Ascending aorta (tissue), 2 donors: ENCODE measurements at regions of chr22 and their contacts with region 1.

Region 1: GRCh38 chr22:30005213-30005857 is 74.9 kb upstream of the HORMAD2 start:
- DNase-seq: peak in 1 of 2 donors; percentile 79
- H3K4me3 ChIP-seq: no peak overlapping the region
- H3K27ac ChIP-seq: no peak overlapping the region
- H3K4me1 ChIP-seq: no peaks in the 10 kb centered on the region
- H3K27me3 ChIP-seq: no peaks in the 10 kb centered on the region
- CTCF ChIP-seq: peak; percentile 79 to 95 (median 95)

Region 2: DNA sequence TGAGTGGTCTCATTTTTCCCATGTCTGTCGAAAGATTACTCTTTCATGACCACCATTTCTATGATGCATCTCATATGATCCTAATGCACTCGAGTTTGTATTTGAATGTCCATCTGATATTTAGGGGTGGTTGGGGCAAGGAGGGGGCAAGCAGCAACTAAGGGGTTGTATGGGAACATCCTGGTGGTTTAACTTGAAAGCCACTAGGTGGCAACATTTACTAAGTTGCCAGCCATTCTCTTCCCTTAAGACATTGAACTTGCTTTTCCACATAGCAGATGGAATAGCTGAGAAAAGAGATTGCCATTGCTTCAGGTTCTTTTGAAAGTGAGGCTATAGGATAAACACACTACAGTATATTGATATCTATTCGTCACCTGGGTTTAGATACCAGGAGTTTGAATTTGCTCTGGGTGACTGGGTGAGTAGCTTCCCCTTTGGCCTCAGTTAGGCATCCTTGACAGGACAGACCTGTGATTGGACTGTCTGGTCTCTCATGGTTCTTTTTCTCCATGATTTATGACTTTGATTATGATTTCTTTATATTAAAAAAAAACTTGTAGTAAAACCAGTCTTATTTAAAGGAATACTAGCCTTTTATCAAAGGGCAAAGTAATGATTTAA is 369.5 kb before region 1 on chr22:
- intact Hi-C with region 1: loop called (anchors 10 kb)
- DNase-seq: no peak
- H3K4me3 ChIP-seq: no peak overlapping the region
- H3K27ac ChIP-seq: no peak overlapping the region
- H3K4me1 ChIP-seq: no peaks in the 10 kb centered on the region
- H3K27me3 ChIP-seq: no peaks in the 10 kb centered on the region
- CTCF ChIP-seq: peak; percentile 34 to 53 (median 39)

Region 3: DNA sequence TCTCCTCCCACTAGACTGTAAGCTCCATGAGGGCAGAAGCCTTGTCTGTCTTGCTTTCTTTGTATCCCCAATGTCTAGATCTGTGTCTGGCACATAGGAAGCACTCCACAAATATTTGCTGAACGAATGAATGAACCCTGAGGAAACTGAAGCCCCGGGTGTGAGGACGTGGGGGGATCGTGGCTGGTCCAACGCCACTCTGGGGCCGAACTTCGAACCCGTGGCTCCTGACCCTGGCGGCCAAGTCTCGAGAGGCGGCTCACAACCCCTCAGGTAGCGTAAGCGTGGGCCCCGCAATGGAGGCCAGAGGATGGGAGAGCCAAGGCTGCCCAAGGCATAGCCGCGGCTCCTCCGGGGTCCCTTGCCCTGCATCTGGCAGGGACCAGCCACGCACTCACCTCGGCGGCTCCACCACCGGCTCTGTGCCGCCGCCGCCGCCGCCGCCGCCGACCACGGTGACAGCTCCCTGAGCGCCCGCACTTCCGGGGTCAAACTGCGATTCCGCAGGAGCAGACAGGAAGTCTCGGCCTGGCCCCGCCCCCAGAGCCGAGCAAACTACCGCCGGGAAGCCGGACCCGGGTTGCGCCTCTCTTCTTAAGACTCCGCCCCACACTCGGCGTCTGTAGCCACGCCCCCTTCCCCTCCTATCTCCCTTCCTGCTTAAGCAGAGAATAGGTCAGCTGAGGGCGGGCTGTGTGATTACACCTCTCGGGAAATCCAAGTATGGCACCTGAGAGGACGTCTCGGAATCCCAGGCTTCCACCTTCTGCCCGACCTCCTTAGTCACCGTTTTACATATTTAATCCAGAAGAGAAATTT is 167.3 kb before region 1 on chr22 and contains the start of gene ASCC2:
- intact Hi-C with region 1: loop called (anchors 1 kb)
- DNase-seq: peak; percentile 95 to 100
- H3K4me3 ChIP-seq: peak within 1 kb of the TSS; percentile 69 to 71
- H3K27ac ChIP-seq: peak within 1 kb of the TSS; percentile 68 to 83
- H3K4me1 ChIP-seq: peaks cover 5 to 13% of the 10 kb centered on the region in 2 donors
- H3K27me3 ChIP-seq: no peaks in the 10 kb centered on the region
- CTCF ChIP-seq: peak in 1 of 3 experiments; percentile 8
- total RNA-seq, gene ASCC2: 24.9 TPM

Region 4: GRCh38 chr22:29883045-29883774 is 122.1 kb before region 1 on chr22 and contains the start of gene MTMR3:
- intact Hi-C with region 1: loop called (anchors 10 kb)
- DNase-seq: peak; percentile 76 to 96
- H3K4me3 ChIP-seq: peak within 1 kb of the TSS; percentile 79 to 82
- H3K27ac ChIP-seq: peak within 1 kb of the TSS; percentile 89 to 93
- H3K4me1 ChIP-seq: peaks cover 0 to 7% of the 10 kb centered on the region in 2 donors
- H3K27me3 ChIP-seq: no peaks in the 10 kb centered on the region
- CTCF ChIP-seq: peak; percentile 47 to 64 (median 61)
- total RNA-seq, gene MTMR3: 26.1 TPM

Region 5: GRCh38 chr22:29972121-29972520 is 33.2 kb before region 1 on chr22:
- intact Hi-C with region 1: no loop called
- DNase-seq: no peak
- H3K4me3 ChIP-seq: no peak overlapping the region
- H3K27ac ChIP-seq: no peak overlapping the region
- H3K4me1 ChIP-seq: no peaks in the 10 kb centered on the region
- H3K27me3 ChIP-seq: no peaks in the 10 kb centered on the region
- CTCF ChIP-seq: no peak